ENCODE measurements at regions of chr22 and their contacts with region 1.

Region 1: DNA sequence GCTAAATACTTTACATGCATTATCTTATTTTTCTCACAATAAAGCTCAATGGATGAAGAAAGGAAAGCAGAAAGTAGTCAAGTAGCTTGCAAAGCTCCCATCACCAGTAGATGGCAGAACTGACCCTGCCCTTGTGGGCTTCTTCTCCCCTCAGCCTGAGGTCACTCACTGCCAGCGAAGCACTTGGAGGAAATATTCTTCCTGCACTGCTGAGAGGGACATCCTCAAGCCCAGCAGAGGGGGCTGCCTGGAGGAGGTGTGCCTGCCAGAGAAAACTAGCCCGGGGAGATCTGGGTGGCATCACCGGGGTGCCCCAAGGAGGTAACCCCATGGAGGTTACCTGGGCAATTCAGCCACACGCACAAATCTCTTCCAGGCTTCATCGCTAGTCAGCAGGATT is 6.6 kb downstream of the APOL4 start:
- DNase-seq: no peak
- H3K4me3 ChIP-seq: no peak overlapping the region
- H3K27ac ChIP-seq: no peak overlapping the region
- H3K4me1 ChIP-seq: peaks cover 26 to 49% (median 35%) of the 10 kb centered on the region in 4 donors
- H3K27me3 ChIP-seq: no peaks in the 10 kb centered on the region
- CTCF ChIP-seq: peak; percentile 64 to 82 (median 80)
- EP300 ChIP-seq: no peak
- POLR2A ChIP-seq: no peak

Region 2: GRCh38 chr22:36239401-36240171 is 44.6 kb after region 1 on chr22 and contains the start of gene APOL2:
- intact Hi-C with region 1: loop called (anchors 5 kb)
- DNase-seq: peak; percentile 96
- H3K4me3 ChIP-seq: peak within 1 kb of the TSS; percentile 60 to 70 (median 60)
- H3K27ac ChIP-seq: peak within 1 kb of the TSS; percentile 85 to 90 (median 88)
- H3K4me1 ChIP-seq: peaks cover 47 to 63% (median 62%) of the 10 kb centered on the region in 4 donors
- H3K27me3 ChIP-seq: no peaks in the 10 kb centered on the region
- CTCF ChIP-seq: peak; percentile 77 to 78 (median 77)
- EP300 ChIP-seq: no peak
- POLR2A ChIP-seq: peak; percentile 59
- total RNA-seq, gene APOL2: 22.0 to 41.9 (median 34.4) TPM

Region 3: GRCh38 chr22:36277482-36278291 is 82.7 kb after region 1 on chr22:
- intact Hi-C with region 1: loop called (anchors 5 kb)
- DNase-seq: no peak
- H3K4me3 ChIP-seq: no peak overlapping the region
- H3K27ac ChIP-seq: peak overlapping the region in 3 of 4 donors; percentile 53 to 70 (median 65)
- H3K4me1 ChIP-seq: peaks cover 11 to 42% (median 26%) of the 10 kb centered on the region in 4 donors
- H3K27me3 ChIP-seq: no peaks in the 10 kb centered on the region
- CTCF ChIP-seq: peak; percentile 77 to 89 (median 79)
- EP300 ChIP-seq: no peak
- POLR2A ChIP-seq: no peak

Region 4: DNA sequence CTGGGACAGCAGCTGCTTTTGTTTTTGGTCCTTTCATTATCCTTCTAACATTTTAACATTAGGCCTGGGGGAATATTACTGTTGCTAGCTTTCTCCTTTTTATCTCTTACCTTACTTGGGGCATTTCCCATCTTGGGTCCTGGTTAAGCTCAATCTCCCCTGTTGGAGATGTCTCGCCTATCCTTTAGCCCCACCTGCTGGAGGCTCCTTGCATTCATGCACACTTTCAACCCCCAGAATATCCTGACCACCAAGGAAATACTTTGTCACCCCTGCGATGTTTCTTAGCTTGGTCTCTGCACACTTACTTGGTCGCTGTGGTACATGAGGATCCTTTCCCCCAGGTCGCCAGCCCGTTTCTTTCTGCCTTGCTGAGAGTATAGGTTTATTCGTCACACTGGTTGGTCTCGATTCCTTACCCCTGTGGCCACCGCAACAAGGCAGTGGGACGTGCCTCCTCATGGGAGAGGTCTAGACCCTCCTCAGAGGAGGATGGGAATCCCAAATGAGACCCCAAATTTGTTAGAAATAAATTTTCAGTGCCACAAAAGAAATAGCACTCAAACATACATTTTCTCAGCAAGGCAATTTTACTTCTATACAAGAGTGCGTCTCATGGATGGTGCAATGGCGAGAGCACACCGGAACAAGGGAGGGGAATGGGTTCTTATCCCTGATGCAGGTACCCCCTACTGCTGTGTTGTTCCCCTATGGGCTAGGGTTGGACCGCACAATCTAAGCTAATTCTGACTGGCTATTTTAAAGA is 291.8 kb after region 1 on chr22:
- intact Hi-C with region 1: loop called (anchors 5 kb)
- DNase-seq: no peak
- H3K4me3 ChIP-seq: no peak overlapping the region
- H3K27ac ChIP-seq: no peak overlapping the region
- H3K4me1 ChIP-seq: peaks cover 5 to 7% (median 6%) of the 10 kb centered on the region in 4 donors
- H3K27me3 ChIP-seq: no peaks in the 10 kb centered on the region
- CTCF ChIP-seq: peak; percentile 72 to 83 (median 81)
- EP300 ChIP-seq: no peak
- POLR2A ChIP-seq: no peak

Region 5: DNA sequence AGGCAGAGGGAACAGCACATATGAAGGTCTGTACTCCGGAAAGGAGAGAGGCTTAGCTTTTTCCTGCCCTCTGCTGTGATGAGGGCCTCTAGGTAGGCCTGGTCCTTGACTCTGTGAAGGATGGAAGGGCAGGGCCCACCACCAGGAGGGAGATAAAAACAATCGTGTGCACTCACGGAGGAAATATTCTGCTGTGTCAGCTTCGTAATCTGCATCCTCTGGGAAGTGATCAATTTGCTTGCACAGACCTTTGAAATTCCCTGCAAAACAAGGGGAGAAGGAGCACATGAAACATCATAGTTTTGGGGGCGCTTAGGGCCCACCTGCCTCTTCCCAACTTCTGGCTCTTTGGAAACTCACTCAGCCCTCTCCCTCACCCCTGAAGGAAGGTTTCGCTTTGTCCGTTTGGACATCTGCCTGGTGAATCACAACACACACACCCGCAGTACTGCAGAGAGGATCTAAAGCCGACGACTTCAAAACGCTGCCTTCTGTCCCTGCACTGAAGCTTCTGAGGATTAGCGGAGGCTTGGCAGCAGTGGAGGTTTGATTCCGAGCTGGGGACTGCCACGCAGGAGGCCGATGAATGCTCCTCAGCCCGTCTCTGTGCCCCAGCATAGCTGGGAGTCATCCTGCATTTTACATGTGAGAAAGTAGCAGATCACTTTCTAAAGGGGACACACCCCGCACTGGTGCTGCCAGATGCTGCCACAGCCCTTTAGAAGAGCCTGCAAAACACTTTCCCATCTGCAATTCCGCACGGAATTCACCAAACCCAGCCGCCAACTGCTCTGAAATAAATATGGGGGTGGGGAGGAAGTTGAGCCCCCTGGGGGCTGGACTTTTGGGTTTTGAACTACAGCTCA is 392.6 kb after region 1 on chr22:
- intact Hi-C with region 1: no loop called
- DNase-seq: no peak
- H3K4me3 ChIP-seq: peak overlapping the region in 3 of 4 donors; percentile 6 to 36 (median 15)
- H3K27ac ChIP-seq: no peak overlapping the region
- H3K4me1 ChIP-seq: peaks cover 0 to 10% (median 2%) of the 10 kb centered on the region in 4 donors
- H3K27me3 ChIP-seq: peaks cover 0 to 58% (median 0%) of the 10 kb centered on the region in 4 donors
- CTCF ChIP-seq: no peak
- EP300 ChIP-seq: no peak
- POLR2A ChIP-seq: no peak